Activated CD4-positive, alpha-beta memory T cell treated with anti-CD3 and anti-CD28 coated beads for 36 hours (primary cell): ENCODE measurements at regions of chr1 and their contacts with region 1.

Region 1: GRCh38 chr1:169711469-169712281 is at the start of gene SELL:
- DNase-seq: peak; percentile 85
- H3K4me3 Mint-ChIP-seq: peak within 1 kb of the TSS; percentile 71
- H3K27ac Mint-ChIP-seq: peak within 1 kb of the TSS; percentile 81
- H3K4me1 Mint-ChIP-seq: peaks cover 21% of the 10 kb centered on the region
- H3K27me3 Mint-ChIP-seq: peaks cover 2% of the 10 kb centered on the region
- total RNA-seq, gene SELL: 103 to 110 TPM

Region 2: GRCh38 chr1:169485544-169486278 is 226.0 kb before region 1 on chr1 and contains the start of gene SLC19A2:
- CTCF ChIA-PET with region 1: interaction called, 4 read pairs
- POLR2A ChIA-PET with region 1: no interaction called
- intact Hi-C with region 1: loop called (anchors 2 kb)
- DNase-seq: peak; percentile 96
- H3K4me3 Mint-ChIP-seq: peak within 1 kb of the TSS; percentile 79
- H3K27ac Mint-ChIP-seq: peak within 1 kb of the TSS; percentile 83
- H3K4me1 Mint-ChIP-seq: peaks cover 53% of the 10 kb centered on the region
- H3K27me3 Mint-ChIP-seq: no peaks in the 10 kb centered on the region
- total RNA-seq, gene SLC19A2: 8.6 to 9.4 TPM

Region 3: DNA sequence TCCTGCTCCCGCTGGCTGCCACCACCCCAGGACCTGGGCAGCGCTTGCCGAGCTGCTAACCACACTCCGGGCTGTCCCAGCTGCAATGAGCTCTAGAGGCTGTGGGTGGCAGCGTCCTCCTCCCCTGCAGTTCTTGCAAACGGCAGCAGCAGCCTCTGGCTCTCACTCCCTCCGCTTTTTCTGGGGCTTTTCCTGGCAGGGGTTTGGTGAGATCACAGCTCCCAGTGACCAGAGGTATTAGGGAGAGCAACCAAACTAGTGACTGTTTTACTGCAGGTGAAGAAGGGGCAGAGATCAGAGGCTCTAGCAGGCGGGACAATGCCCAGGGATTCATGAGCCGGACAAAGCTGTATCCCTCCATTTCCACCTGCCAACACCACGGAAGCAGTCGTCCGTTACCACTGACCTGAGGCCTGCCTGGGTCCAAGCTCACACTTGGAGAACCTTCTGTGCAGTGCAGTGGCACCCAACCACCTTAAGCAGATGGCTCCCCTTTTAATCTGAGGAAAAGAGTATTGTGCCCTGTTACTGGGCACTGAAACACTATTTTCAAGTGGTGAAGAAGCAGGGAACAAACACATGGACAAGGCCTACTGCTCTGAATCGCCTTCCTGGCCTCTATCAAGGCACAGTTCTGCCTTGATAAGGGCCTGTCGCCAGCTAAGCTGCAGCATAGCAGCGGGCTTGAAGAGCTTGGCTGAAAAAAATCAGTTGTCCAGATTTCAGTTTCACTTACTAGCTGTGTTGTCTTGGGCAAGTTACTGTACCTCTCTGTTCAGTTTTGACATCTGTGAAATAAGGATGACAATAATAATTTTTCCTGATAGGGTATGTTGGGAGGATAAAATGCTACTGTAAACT is 125.0 kb before region 1 on chr1 and contains the start of gene F5:
- CTCF ChIA-PET with region 1: interaction called, 88 read pairs
- POLR2A ChIA-PET with region 1: interaction called, 3 read pairs
- intact Hi-C with region 1: loop called (anchors 1 kb)
- DNase-seq: peak; percentile 90
- H3K4me3 Mint-ChIP-seq: peak within 1 kb of the TSS; percentile 96
- H3K27ac Mint-ChIP-seq: peak within 1 kb of the TSS; percentile 94
- H3K4me1 Mint-ChIP-seq: peaks cover 61% of the 10 kb centered on the region
- H3K27me3 Mint-ChIP-seq: no peaks in the 10 kb centered on the region
- total RNA-seq, gene F5: 50.8 to 51.1 TPM

Region 4: GRCh38 chr1:169610108-169610507 is 101.6 kb before region 1 on chr1:
- CTCF ChIA-PET with region 1: interaction called, 10 read pairs
- POLR2A ChIA-PET with region 1: no interaction called
- intact Hi-C with region 1: no loop called
- DNase-seq: no peak
- H3K4me3 Mint-ChIP-seq: no peak overlapping the region
- H3K27ac Mint-ChIP-seq: no peak overlapping the region
- H3K4me1 Mint-ChIP-seq: peaks cover 16% of the 10 kb centered on the region
- H3K27me3 Mint-ChIP-seq: no peaks in the 10 kb centered on the region

Region 5: DNA sequence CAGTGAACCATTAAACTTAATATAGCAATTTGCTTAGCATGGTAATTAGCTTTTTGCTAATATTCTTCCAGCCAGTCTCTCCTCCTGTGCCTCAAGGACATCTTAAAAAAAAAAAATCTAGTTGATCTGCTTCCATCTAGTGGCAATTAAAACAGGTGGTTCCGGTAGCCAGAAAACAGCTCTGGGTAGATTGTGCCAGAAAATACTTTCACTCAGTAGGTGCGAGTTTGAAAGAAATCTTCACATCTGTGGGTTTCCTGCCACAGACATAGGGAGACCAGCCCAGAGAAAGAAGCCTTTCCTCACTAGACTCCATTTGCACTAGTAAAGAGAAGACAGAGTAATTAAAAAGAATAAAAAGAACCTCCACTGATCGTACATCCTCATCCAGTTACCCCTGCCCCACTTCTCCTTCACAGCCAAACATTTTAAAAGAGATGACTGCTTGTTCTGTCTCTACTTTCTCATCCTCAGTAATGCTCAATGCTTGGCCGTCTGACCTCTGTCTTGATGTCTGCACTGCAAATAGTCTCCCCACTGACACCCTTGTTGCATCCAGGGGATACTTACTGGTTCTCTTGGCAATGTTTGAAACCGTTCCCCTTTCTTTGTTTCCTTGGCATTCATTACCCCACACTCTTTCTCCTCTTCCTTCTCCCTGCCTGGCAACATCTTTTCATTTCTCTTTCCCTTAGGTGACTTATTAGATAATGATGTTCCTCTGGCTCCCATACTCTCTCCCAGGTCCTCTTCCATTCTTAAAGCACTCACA is 17.2 kb before region 1 on chr1:
- CTCF ChIA-PET with region 1: interaction called, 22 read pairs
- POLR2A ChIA-PET with region 1: interaction called, 28 read pairs
- intact Hi-C with region 1: loop called (anchors 1 kb)
- DNase-seq: peak; percentile 46
- H3K4me3 Mint-ChIP-seq: peak overlapping the region; percentile 9
- H3K27ac Mint-ChIP-seq: peak overlapping the region; percentile 88
- H3K4me1 Mint-ChIP-seq: peaks cover 96% of the 10 kb centered on the region
- H3K27me3 Mint-ChIP-seq: no peaks in the 10 kb centered on the region

Region 6: DNA sequence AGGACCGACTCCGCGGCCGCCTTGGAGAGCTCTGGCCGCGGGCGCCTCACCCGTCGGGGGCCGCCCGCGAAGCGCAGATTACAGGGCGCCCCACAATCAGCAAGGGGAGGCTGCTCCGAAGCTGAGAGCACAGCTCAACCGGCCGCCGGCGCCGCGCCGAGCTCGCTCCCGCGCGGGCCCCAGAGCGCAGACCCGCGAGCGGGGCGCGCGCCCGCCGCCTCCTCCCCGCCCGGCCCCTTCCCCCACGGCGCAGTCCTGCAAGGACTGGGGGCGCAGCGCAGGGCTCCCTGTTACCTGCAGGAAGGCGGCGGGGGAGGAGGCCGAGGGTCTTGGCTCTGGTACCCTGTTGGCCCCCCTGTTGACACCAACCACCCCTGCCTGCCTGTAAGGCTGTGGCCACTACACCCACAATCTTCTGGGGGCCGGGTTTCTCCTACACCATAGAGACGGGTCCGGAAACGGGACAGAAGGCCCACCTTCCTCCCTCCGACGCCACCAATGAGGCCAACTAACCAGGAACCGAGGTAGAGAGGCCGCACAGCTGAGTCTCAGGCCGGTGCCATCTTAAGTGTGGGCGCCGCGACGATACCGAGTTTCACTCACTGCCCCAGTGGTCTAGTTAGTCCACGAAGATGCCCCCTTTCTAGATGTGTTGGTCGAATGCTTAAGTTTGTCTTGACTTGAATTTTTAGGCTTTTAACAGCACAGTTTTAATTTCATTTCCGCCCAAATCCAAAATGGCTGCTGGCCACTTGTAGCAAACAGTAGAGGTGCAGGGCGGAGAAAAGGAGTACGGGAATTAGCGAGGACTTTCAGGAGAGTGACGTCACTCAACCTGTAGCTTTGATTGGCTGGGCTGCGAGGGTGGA is 182.1 kb after region 1 on chr1 and contains the start of gene SCYL3:
- CTCF ChIA-PET with region 1: no interaction called
- POLR2A ChIA-PET with region 1: interaction called, 3 read pairs
- intact Hi-C with region 1: loop called (anchors 2 kb)
- DNase-seq: peak; percentile 92
- H3K4me3 Mint-ChIP-seq: peak within 1 kb of the TSS; percentile 82
- H3K27ac Mint-ChIP-seq: peak within 1 kb of the TSS; percentile 98
- H3K4me1 Mint-ChIP-seq: peaks cover 38% of the 10 kb centered on the region
- H3K27me3 Mint-ChIP-seq: no peaks in the 10 kb centered on the region
- total RNA-seq, gene SCYL3: 11.1 to 12.4 TPM

Region 7: DNA sequence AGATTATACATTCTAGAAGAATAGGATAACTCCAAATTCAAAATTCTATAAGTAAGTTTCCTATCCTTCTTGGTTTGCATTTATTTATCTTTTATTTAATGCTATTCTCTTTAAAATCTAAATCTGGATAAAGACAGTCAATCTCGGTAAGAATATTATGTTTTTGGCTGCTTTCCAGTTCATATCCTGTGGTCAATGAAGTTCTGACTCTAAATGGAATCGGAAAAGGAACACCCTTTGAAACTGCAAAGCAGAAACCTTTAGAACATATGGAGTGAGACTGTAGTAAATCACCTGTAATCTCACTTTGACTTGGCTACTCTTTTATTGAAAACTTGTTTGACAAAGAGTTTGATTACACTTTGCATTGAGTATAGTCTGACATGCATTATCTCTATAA is 277.6 kb after region 1 on chr1:
- CTCF ChIA-PET with region 1: no interaction called
- POLR2A ChIA-PET with region 1: no interaction called
- intact Hi-C with region 1: no loop called
- DNase-seq: no peak
- H3K4me3 Mint-ChIP-seq: no peak overlapping the region
- H3K27ac Mint-ChIP-seq: no peak overlapping the region
- H3K4me1 Mint-ChIP-seq: no peaks in the 10 kb centered on the region
- H3K27me3 Mint-ChIP-seq: no peaks in the 10 kb centered on the region